A673 (cell line): ENCODE measurements at regions of chr11 and their contacts with region 1.

Region 1: DNA sequence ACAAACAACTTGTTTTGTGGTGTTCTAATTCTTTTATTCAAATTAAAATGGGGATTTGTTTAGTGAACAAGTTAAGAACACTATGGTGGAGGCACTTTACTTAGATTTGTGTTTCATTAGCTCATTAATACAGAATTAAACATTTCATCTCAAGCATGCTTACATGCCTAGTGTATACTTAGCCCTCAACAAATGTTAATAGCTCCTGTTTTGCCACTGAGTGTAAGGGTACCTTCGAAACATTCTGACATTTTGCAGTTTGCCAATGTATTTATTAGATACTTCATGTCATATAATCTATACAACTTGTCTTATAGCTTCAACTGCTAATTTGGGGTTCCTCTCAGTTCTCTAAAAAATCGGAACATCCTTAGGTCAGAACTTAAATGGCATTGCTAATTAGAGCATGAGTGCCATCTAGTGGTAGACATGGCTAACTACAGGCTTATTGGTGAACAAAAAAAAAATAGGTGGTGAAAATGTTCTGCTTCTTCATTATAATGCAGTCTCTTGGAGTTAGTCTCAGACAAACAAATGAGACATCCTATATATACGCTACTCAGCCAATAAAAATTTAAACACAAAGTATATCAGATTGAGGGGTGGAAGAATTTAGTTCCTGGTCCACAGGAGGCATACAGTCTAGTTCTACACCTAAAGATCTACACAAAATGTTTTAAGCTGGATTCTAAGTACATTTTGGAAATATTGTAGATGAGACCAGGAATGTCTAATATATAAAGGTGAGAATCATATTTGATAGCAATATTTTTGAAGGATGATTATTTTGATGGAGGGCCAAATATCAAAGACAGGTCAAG is 4.9 kb upstream of the CNTN5 start:
- DNase-seq: peak; percentile 69
- H3K4me3 ChIP-seq: no peak overlapping the region
- H3K27ac ChIP-seq: no peak overlapping the region
- H3K4me1 ChIP-seq: peaks cover 7% of the 10 kb centered on the region
- H3K27me3 ChIP-seq: no peaks in the 10 kb centered on the region
- CTCF ChIP-seq: peak; percentile 95

Region 2: DNA sequence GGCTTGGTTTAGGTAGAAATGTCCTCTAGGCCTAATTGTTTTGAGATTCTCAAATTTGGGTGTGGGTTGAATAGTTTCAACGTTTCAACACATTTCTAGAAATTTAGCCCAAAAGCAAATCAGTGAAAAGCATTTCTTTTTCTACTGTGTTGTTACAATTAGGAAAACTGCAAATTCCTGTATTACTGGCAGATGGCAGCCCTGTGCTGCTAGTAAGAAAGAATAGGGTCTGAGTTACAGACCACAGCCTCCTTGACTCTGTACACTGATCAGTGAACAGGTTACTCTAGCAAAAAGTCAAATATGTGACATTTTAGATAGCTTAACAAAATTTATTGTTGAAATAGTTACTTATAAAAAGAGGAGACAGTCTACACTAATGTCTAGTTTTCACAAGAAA is 1923.0 kb before region 1 on chr11:
- CTCF ChIA-PET with region 1: no interaction called
- POLR2A ChIA-PET with region 1: no interaction called
- intact Hi-C with region 1: loop called (anchors 10 kb)
- DNase-seq: no peak
- H3K4me3 ChIP-seq: no peak overlapping the region
- H3K27ac ChIP-seq: no peak overlapping the region
- H3K4me1 ChIP-seq: no peaks in the 10 kb centered on the region
- H3K27me3 ChIP-seq: no peaks in the 10 kb centered on the region
- CTCF ChIP-seq: 0 out of 2 replicates have a peak, but pooled peaks have one; percentile 11

Region 3: GRCh38 chr11:97140885-97141494 is 1874.9 kb before region 1 on chr11:
- CTCF ChIA-PET with region 1: no interaction called
- POLR2A ChIA-PET with region 1: no interaction called
- intact Hi-C with region 1: loop called (anchors 5 kb)
- DNase-seq: peak; percentile 53
- H3K4me3 ChIP-seq: no peak overlapping the region
- H3K27ac ChIP-seq: no peak overlapping the region
- H3K4me1 ChIP-seq: no peaks in the 10 kb centered on the region
- H3K27me3 ChIP-seq: no peaks in the 10 kb centered on the region
- CTCF ChIP-seq: peak; percentile 80

Region 4: GRCh38 chr11:97269527-97269926 is 1746.3 kb before region 1 on chr11:
- CTCF ChIA-PET with region 1: no interaction called
- POLR2A ChIA-PET with region 1: no interaction called
- intact Hi-C with region 1: loop called (anchors 10 kb)
- DNase-seq: peak; percentile 35
- H3K4me3 ChIP-seq: no peak overlapping the region
- H3K27ac ChIP-seq: no peak overlapping the region
- H3K4me1 ChIP-seq: no peaks in the 10 kb centered on the region
- H3K27me3 ChIP-seq: no peaks in the 10 kb centered on the region
- CTCF ChIP-seq: peak; percentile 52

Region 5: GRCh38 chr11:97454988-97455387 is 1560.9 kb before region 1 on chr11:
- CTCF ChIA-PET with region 1: no interaction called
- POLR2A ChIA-PET with region 1: no interaction called
- intact Hi-C with region 1: loop called (anchors 5 kb)
- DNase-seq: peak; percentile 23
- H3K4me3 ChIP-seq: no peak overlapping the region
- H3K27ac ChIP-seq: no peak overlapping the region
- H3K4me1 ChIP-seq: no peaks in the 10 kb centered on the region
- H3K27me3 ChIP-seq: no peaks in the 10 kb centered on the region
- CTCF ChIP-seq: peak; percentile 52

Region 6: GRCh38 chr11:99739464-99740089 is 723.7 kb after region 1 on chr11:
- CTCF ChIA-PET with region 1: no interaction called
- POLR2A ChIA-PET with region 1: no interaction called
- intact Hi-C with region 1: loop called (anchors 2 kb)
- DNase-seq: peak; percentile 80
- H3K4me3 ChIP-seq: no peak overlapping the region
- H3K27ac ChIP-seq: no peak overlapping the region
- H3K4me1 ChIP-seq: peaks cover 4% of the 10 kb centered on the region
- H3K27me3 ChIP-seq: no peaks in the 10 kb centered on the region
- CTCF ChIP-seq: peak; percentile 84